Activated CD4-positive, alpha-beta T cell treated with anti-CD3 and anti-CD28 coated beads for 36 hours (primary cell): ENCODE measurements at regions of chr2 and their contacts with region 1.

Region 1: DNA sequence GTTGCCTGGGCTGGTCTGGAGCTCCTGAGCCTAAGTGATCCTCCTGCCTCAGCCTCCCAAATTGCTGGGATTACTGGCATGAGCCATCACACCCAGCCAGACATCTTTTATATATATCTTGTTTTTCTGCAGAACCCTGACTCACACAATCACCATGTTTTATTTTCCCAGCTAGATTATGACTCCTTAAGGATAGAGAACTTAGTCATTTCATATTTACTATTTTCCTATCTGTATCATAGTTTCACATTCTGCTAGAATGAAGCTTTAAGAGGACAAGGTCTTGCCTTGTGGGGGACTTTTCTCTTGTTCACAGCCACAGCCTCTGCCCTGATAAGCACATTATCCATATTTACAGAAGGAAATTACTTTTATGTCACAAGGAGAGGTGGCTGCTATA is 73.9 kb downstream of the LBH start:
- DNase-seq: no peak
- ATAC-seq: peak; percentile 73
- H3K4me3 Mint-ChIP-seq: no peak overlapping the region
- H3K27ac Mint-ChIP-seq: no peak overlapping the region
- H3K4me1 Mint-ChIP-seq: peaks cover 30% of the 10 kb centered on the region
- H3K27me3 Mint-ChIP-seq: no peaks in the 10 kb centered on the region

Region 2: DNA sequence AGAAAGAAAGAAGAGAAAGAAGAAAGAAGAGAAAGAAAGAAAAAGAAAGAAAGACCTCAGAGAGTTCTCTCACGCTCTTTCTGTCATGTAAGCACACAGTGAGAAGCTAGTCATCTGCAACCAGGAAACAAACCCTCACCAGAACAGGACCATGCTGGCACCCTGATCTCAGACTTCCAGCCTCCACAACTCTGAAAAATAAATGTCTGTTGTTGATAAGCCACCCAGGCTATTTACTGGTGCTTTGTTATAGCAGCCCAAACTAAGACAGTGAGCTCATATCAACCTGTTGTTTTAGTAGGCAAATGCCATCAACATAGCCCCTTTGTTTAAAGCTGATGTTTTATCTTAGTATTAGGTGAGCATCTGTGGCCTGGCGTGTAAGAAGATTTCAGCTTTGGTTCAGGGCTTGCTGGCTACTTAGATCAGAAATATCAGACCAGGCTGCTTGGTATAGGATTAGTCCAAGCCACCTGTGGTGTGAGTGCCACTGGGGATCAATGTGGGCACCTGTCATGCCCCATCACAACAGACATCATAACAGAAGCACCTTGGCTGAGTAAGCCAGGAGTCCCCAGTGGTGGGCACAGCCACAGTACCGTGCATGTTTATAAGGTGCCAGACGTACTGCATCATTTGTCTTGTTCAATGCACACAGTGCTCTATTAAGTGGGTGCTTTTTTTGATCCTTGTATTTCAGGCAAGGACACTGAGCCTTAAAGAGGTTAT is 20.5 kb after region 1 on chr2:
- CTCF ChIA-PET with region 1: interaction called, 10 read pairs
- POLR2A ChIA-PET with region 1: no interaction called
- intact Hi-C with region 1: no loop called
- DNase-seq: no peak
- ATAC-seq: peak; percentile 71
- H3K4me3 Mint-ChIP-seq: no peak overlapping the region
- H3K27ac Mint-ChIP-seq: peak overlapping the region; percentile 11
- H3K4me1 Mint-ChIP-seq: peaks cover 22% of the 10 kb centered on the region
- H3K27me3 Mint-ChIP-seq: no peaks in the 10 kb centered on the region